HepG2 (cell line): ENCODE measurements at regions of chr2 and their contacts with region 1.

Region 1: GRCh38 chr2:137964066-137964858 is at the start of gene HNMT:
- DNase-seq: peak; percentile 100
- ATAC-seq: peak; percentile 96
- H3K4me3 ChIP-seq: peak within 1 kb of the TSS; percentile 66 to 85 (median 82)
- H3K27ac ChIP-seq: peak within 1 kb of the TSS; percentile 100
- H3K4me1 ChIP-seq: peaks cover 64% of the 10 kb centered on the region
- H3K27me3 ChIP-seq: no peaks in the 10 kb centered on the region; a peak in 2 of 5 replicates
- CTCF ChIP-seq: no peak
- EP300 ChIP-seq: peak; percentile 99 to 100
- POLR2A ChIP-seq: peak; percentile 98 to 99
- RAD21 ChIP-seq: peak; percentile 67
- total RNA-seq, gene HNMT: 309 and 372 TPM in 2 replicates

Region 2: GRCh38 chr2:137888845-137889244 is 75.4 kb before region 1 on chr2:
- CTCF ChIA-PET with region 1: no interaction called
- POLR2A ChIA-PET with region 1: no interaction called
- in situ Hi-C with region 1: no loop called
- intact Hi-C with region 1: loop called (anchors 2 kb)
- DNase-seq: peak; percentile 63
- ATAC-seq: peak; percentile 89
- H3K4me3 ChIP-seq: no peak overlapping the region
- H3K27ac ChIP-seq: no peak overlapping the region
- H3K4me1 ChIP-seq: peaks cover 23% of the 10 kb centered on the region
- H3K27me3 ChIP-seq: peaks cover 0 to 4% of the 10 kb centered on the region in 2 experiments; a peak in 1 of 5 replicates
- CTCF ChIP-seq: peak; percentile 96
- EP300 ChIP-seq: no peak
- POLR2A ChIP-seq: no peak
- RAD21 ChIP-seq: peak; percentile 77

Region 3: GRCh38 chr2:137947728-137948336 is 16.4 kb before region 1 on chr2:
- CTCF ChIA-PET with region 1: no interaction called
- POLR2A ChIA-PET with region 1: interaction called, 733 read pairs
- in situ Hi-C with region 1: no loop called
- intact Hi-C with region 1: loop called (anchors 1 kb)
- DNase-seq: peak; percentile 79
- ATAC-seq: no peak
- H3K4me3 ChIP-seq: no peak overlapping the region
- H3K27ac ChIP-seq: peak overlapping the region; percentile 11
- H3K4me1 ChIP-seq: peaks cover 66% of the 10 kb centered on the region
- H3K27me3 ChIP-seq: no peaks in the 10 kb centered on the region
- CTCF ChIP-seq: peak; percentile 65
- EP300 ChIP-seq: no peak
- POLR2A ChIP-seq: no peak
- RAD21 ChIP-seq: peak; percentile 89

Region 4: GRCh38 chr2:137992039-137992646 is 27.9 kb after region 1 on chr2:
- CTCF ChIA-PET with region 1: no interaction called
- POLR2A ChIA-PET with region 1: interaction called, 16 read pairs
- in situ Hi-C with region 1: no loop called
- intact Hi-C with region 1: no loop called
- DNase-seq: no peak
- ATAC-seq: peak; percentile 63
- H3K4me3 ChIP-seq: no peak overlapping the region
- H3K27ac ChIP-seq: no peak overlapping the region
- H3K4me1 ChIP-seq: no peaks in the 10 kb centered on the region
- H3K27me3 ChIP-seq: no peaks in the 10 kb centered on the region
- CTCF ChIP-seq: no peak
- EP300 ChIP-seq: no peak
- POLR2A ChIP-seq: peak; percentile 21; a peak in 2 of 4 replicates
- RAD21 ChIP-seq: no peak

Region 5: GRCh38 chr2:138026111-138027020 is 62.1 kb after region 1 on chr2:
- CTCF ChIA-PET with region 1: no interaction called
- POLR2A ChIA-PET with region 1: no interaction called
- in situ Hi-C with region 1: no loop called
- intact Hi-C with region 1: no loop called
- DNase-seq: no peak
- ATAC-seq: no peak
- H3K4me3 ChIP-seq: no peak overlapping the region
- H3K27ac ChIP-seq: no peak overlapping the region
- H3K4me1 ChIP-seq: no peaks in the 10 kb centered on the region
- H3K27me3 ChIP-seq: peaks cover 0 to 3% of the 10 kb centered on the region in 2 experiments; a peak in 1 of 5 replicates
- CTCF ChIP-seq: no peak
- EP300 ChIP-seq: no peak
- POLR2A ChIP-seq: no peak
- RAD21 ChIP-seq: no peak

Region 6: DNA sequence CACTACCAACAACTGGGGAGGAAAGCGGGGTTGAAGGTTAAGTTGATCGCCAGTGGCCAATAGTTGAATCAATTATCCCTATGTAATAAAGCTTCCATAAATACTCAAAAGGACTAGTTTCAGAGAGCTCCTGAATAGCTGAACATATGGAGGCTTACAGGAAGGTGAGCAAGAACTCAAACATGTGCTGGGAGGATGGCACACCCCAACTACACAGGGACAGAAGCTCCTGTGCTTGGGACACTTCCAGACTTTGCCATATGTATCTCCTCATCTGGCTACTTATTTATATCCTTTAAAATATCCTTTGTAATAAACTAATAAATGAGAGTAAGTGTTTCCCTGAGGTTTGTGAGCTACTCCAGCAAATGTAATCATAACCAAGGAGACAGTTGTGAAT is 115.7 kb after region 1 on chr2:
- CTCF ChIA-PET with region 1: no interaction called
- POLR2A ChIA-PET with region 1: no interaction called
- in situ Hi-C with region 1: no loop called
- intact Hi-C with region 1: loop called (anchors 2 kb)
- DNase-seq: no peak
- ATAC-seq: no peak
- H3K4me3 ChIP-seq: no peak overlapping the region
- H3K27ac ChIP-seq: no peak overlapping the region
- H3K4me1 ChIP-seq: peaks cover 20% of the 10 kb centered on the region
- H3K27me3 ChIP-seq: no peaks in the 10 kb centered on the region
- CTCF ChIP-seq: no peak
- EP300 ChIP-seq: no peak
- POLR2A ChIP-seq: no peak
- RAD21 ChIP-seq: no peak

Region 7: DNA sequence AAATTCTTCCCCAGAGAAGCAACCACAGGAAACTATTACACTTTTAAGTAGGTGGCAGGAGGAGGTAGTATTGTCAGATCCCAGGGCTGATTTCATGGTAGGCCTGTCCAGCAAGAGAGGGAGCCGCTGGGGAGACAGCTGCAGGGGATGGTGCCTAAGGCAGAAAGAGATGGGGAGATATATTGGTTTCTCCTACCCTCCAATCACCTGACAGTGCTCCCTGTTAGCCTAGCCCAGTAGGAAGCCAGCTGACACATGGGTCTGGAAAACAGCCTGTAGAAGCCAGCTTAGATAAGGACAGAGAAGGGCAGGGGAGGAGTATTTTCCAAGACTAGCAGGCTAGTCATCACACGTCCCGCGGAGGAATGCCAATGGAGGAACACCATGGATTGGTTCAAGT is 529.1 kb after region 1 on chr2:
- CTCF ChIA-PET with region 1: no interaction called
- POLR2A ChIA-PET with region 1: interaction called, 26 read pairs
- in situ Hi-C with region 1: no loop called
- intact Hi-C with region 1: loop called (anchors 5 kb)
- DNase-seq: no peak
- ATAC-seq: no peak
- H3K4me3 ChIP-seq: no peak overlapping the region
- H3K27ac ChIP-seq: peak overlapping the region; percentile 69
- H3K4me1 ChIP-seq: peaks cover 78% of the 10 kb centered on the region
- H3K27me3 ChIP-seq: no peaks in the 10 kb centered on the region
- CTCF ChIP-seq: no peak
- EP300 ChIP-seq: no peak
- POLR2A ChIP-seq: no peak
- RAD21 ChIP-seq: no peak